A549 (cell line): ENCODE measurements at regions of chr17 and their contacts with region 1.

Region 1: GRCh38 chr17:57243171-57243948 is 13.0 kb upstream of the MSI2 start:
- DNase-seq: peak; percentile 77 to 88
- ATAC-seq: peak; percentile 83 to 95
- H3K4me3 ChIP-seq: no peak overlapping the region
- H3K27ac ChIP-seq: peak overlapping the region; percentile 15 to 47; a peak in 3 of 6 replicates
- H3K4me1 ChIP-seq: peaks cover 8% of the 10 kb centered on the region; the same call in 1 of the 3 replicates
- CTCF ChIP-seq: peak; percentile 100
- EP300 ChIP-seq: no peak
- POLR2A ChIP-seq: no peak
- RAD21 ChIP-seq: peak; percentile 99

Region 2: DNA sequence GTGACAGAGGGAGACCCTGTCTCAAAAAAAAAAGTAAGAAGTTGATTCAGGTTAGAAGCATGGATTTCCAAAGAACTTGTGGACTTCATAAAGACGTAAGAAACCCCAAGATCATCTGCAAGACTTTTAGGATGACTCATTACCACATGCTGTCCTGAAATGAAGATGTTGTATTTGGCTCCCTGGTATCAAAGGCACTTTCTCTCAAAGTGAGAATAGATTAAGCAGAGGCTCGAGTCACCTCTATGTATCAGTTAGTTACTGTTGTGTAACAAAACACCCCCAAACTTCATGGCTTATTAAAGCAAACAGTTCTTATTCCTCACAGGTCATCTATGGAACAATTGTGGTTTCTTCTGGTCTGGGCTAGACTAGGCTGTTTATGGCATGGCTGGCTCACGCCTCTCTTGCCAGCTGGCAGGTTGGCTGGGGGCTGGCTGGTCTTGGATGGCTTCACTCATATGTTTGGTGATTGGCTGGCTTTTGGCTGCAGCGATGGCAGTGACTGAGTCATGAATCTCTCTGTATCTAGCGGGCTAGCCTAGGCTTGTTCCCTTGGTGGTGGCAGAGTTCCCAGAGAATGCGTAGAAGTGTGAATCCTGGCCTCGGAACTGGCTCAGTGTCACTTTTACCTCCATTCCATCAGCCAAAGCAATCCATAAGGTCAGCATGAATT is 47.4 kb before region 1 on chr17:
- CTCF ChIA-PET with region 1: interaction called, 14 read pairs
- POLR2A ChIA-PET with region 1: no interaction called
- DNase-seq: no peak
- ATAC-seq: no peak
- H3K4me3 ChIP-seq: no peak overlapping the region
- H3K27ac ChIP-seq: no peak overlapping the region
- H3K4me1 ChIP-seq: no peaks in the 10 kb centered on the region
- CTCF ChIP-seq: no peak
- EP300 ChIP-seq: no peak
- POLR2A ChIP-seq: no peak
- RAD21 ChIP-seq: no peak

Region 3: DNA sequence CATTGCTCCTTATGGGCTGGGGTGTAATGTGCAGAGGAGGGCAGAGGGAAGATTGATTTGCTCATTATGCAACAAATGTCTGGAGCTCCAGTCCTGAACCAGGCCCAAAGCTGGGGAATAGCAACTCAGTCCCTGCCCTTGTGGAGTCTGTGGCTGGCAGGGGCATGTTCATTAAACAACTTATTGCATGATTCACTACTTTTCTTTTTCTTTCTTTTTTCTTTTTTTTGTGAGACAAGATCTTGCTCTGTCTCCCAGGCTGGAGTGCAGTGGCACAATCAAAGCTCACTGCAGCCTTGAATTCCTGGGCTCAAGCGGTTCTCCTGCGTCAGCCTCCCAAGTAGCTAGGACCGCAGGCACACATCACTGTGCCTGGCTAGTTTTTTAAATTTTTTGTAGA is 36.1 kb after region 1 on chr17:
- CTCF ChIA-PET with region 1: interaction called, 18 read pairs
- POLR2A ChIA-PET with region 1: no interaction called
- DNase-seq: no peak
- ATAC-seq: no peak
- H3K4me3 ChIP-seq: no peak overlapping the region
- H3K27ac ChIP-seq: no peak overlapping the region
- H3K4me1 ChIP-seq: no peaks in the 10 kb centered on the region
- CTCF ChIP-seq: no peak
- EP300 ChIP-seq: no peak
- POLR2A ChIP-seq: no peak
- RAD21 ChIP-seq: no peak

Region 4: DNA sequence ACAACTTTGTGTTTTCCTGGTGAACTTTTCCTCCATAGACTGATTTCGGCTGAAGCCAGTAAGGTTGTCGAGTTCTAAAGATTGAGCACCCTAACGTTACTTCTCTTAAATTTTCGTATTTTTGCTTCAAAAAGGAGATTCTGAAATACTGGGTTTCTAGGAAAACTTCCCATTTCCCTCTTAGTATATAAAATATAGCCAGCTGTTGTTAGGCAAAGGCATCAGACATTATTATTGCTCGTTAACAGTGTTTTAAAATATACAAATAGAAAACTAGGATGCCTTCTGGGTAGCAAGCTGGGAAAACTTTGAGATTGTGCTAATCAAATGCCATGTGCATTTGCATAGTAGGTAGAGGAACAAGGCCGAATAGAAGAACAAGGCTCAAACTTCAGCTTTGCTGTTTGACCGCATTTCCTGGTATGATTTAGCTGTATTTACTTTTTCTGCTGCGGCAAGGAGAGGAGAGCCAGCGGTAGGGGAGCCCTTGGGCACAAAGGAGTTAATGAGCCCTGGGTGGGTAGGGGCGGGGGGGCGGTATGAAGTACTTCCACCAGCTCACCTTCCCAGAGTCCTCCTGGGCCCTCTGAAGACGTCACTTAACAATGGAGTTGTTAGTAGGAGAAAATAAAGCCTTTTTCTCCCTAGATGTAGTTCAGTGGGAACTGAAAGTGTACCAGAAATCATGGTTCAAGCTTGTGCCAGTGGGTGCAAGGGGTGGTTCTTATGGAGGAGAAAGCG is 164.9 kb after region 1 on chr17:
- CTCF ChIA-PET with region 1: interaction called, 37 read pairs
- POLR2A ChIA-PET with region 1: no interaction called
- DNase-seq: no peak
- ATAC-seq: no peak
- H3K4me3 ChIP-seq: no peak overlapping the region
- H3K27ac ChIP-seq: no peak overlapping the region
- H3K4me1 ChIP-seq: peaks cover 11% of the 10 kb centered on the region; the same call in 1 of the 3 replicates
- CTCF ChIP-seq: no peak
- EP300 ChIP-seq: no peak
- POLR2A ChIP-seq: no peak
- RAD21 ChIP-seq: no peak

Region 5: DNA sequence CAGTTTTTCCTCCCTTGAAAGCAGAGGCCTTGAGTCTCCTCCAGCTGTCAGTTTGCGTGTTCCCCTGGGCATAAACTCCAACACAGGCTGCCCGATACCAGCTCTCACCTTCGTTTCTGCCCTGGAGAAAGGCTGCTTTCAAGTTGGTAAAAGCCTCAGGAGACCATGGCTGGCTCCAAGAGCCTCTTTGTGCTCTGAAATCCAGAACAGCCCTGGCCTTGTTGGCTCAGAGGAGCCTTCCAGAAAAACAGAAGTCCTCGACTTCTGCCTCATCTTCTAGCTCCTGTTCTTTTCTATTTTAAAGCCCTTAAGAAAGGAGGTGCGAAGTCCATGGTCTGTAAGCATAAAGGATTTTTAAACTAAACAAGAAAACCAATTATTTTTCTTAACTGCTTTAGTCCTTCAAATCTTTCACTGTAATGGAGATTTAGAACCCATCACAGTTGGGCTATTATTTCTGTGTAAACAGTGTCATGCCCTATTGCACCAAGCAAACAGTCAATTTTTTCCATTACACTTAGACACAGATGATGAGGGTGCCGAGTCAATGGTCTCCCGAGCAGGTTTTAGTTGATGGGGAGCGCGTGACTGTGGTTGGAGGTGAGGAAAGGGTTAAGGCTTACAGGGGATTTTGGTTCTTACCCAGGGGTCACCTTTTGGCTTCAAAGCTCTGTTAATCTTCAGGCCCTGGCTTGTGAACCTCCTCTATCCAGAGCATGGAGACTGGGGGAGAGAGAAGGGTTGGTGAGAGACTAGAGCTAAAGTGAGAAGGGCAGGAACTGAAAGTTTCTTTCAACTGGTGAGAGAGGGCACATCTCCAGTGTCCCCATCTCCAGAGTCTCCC is 225.8 kb after region 1 on chr17:
- CTCF ChIA-PET with region 1: interaction called, 15 read pairs
- POLR2A ChIA-PET with region 1: no interaction called
- DNase-seq: no peak
- ATAC-seq: no peak
- H3K4me3 ChIP-seq: no peak overlapping the region
- H3K27ac ChIP-seq: peak overlapping the region in 1 of 2 experiments; percentile 19; a peak in 1 of 6 replicates
- H3K4me1 ChIP-seq: peaks cover 11% of the 10 kb centered on the region; the same call in 2 of the 3 replicates
- CTCF ChIP-seq: no peak
- EP300 ChIP-seq: no peak
- POLR2A ChIP-seq: no peak
- RAD21 ChIP-seq: no peak

Region 6: DNA sequence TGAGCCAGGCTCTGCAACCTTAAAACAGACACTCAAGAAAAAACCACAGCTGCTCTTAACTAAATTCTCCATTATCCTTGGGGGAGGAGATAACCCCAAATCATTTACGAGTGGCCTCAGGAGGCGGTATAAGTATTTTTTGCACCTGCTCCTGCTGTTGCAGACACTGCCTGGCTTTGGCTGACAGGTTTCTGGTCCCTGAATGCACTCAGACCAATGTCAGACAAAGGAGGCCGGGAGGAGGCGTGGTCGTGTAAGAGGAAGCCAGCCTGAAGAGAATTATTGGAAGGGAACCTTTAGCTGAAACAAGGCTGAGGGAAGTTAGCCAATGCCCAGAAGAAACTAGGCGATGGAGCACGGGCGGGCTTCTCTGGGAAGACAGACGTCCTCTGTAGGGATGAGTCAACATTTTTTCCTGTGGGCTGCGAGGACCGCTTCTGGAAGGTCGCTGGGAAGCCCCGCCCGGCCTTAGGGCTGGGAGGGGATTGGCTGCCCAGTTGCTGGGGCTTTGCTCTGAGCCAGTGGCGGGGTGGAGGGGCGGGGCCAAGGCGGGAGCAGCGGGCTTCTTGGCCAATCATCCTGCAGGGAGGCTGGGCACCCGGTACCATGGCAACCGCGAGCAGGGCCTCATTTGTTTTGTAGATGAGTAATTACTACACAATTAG is 419.4 kb after region 1 on chr17:
- CTCF ChIA-PET with region 1: interaction called, 14 read pairs
- POLR2A ChIA-PET with region 1: no interaction called
- DNase-seq: peak; percentile 37 to 64
- ATAC-seq: peak; percentile 62 to 90; a peak in 4 of 6 replicates
- H3K4me3 ChIP-seq: no peak overlapping the region
- H3K27ac ChIP-seq: no peak overlapping the region
- H3K4me1 ChIP-seq: peaks cover 4% of the 10 kb centered on the region; the same call in 1 of the 3 replicates
- CTCF ChIP-seq: no peak
- EP300 ChIP-seq: no peak
- POLR2A ChIP-seq: no peak
- RAD21 ChIP-seq: no peak

Region 7: GRCh38 chr17:57783106-57783742 is 539.9 kb after region 1 on chr17:
- CTCF ChIA-PET with region 1: interaction called, 36 read pairs
- POLR2A ChIA-PET with region 1: no interaction called
- DNase-seq: peak; percentile 66 to 84
- ATAC-seq: peak; percentile 89 to 96
- H3K4me3 ChIP-seq: peak overlapping the region; percentile 20; the same call in 1 of the 3 replicates
- H3K27ac ChIP-seq: peak overlapping the region; percentile 45 to 79; a peak in 4 of 6 replicates
- H3K4me1 ChIP-seq: 0 out of 3 replicates have a peak, but pooled peaks cover 5% of the 10 kb centered on the region
- CTCF ChIP-seq: peak; percentile 95
- EP300 ChIP-seq: no peak
- POLR2A ChIP-seq: no peak
- RAD21 ChIP-seq: peak; percentile 81 to 91